Right ventricle myocardium inferior (tissue), 1 donor: ENCODE measurements at regions of chr2 and their contacts with region 1.

Region 1: DNA sequence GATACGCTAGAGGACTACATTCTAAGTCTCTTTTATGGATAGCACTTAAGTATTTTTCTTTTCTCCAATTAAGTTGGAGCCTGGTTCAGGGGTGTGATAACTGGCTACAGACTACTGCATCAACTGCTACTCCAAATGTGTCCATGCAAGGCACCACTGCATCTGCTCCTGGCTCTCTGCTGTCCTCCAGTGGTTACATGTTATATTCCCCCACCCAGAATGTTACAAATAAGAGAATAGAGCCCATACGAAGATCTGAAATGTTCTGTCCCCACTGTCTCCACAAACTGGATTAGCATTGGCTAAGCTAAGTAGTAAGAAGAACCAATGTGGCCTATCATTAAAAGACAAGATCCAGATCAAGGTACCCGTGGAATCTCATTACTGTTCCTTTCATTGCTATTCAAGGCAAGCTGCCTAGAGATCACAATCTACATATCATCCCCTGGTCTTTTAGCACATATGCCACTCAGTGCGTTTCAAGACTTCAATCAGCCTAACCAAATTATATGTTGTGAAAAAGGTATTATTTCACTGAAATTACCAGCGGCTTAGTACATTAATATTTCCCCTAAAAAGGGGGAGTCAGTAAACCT is 308.3 kb upstream of the SLC8A1 start:
- DNase-seq: peak; percentile 65
- ATAC-seq: peak; percentile 73

Region 2: DNA sequence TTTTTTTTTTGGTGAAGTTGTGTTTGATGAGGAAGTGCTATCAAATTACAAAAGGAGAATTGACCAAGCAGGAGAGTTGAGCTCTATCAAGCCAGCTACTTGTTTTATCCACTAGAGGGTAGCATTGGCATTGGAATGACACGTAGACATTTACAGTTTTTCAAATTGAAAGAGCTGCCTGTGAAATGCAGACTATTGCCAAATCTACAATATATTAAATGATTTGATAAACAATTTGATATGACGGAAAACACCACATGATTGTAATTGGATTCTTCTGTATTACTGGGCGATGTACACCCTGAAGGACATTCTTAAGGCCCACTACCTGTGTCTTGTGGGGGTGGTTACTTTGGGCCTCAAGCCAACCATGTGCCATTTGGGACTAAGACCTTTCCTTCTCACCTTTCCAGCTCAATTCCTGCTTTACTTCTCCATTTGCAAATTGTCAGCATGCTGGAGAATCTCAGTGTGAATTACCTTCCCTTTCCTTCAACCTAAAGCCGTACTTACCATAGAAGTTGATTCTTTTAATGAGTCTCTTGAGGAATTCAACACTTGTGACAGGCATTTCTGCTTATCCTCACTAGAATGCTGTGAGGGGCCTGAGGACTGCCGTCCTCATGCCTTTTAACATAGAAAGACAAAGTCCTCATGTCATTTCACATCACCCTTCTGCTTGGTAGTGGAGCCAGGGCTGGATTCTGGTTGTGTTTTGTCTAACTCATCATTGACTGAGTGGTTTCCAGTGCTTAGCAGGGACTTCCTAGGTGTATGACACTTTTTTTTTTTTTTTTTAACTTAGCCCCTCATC is 846.3 kb before region 1 on chr2:
- intact Hi-C with region 1: loop called (anchors 2 kb)
- DNase-seq: no peak
- ATAC-seq: peak; percentile 70

Region 3: DNA sequence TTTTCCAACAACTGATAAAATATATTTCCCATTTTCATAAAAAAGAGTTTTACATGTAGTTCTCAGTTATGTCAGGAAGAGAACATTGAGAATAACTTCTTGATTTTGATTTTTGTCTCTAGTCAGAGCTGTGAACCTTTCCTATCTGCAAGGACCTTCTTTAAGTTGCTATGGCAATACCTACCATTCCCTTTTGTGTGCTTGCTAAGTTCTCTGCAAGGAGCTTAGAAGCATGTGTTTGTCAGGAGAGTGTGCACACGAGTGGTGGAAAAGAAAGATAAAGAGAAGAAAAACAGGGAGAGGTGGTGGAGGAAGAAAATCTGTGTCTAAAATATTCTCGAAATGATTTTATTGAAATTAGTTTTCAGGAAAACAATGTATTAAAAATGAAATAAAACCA is 168.0 kb before region 1 on chr2:
- intact Hi-C with region 1: loop called (anchors 10 kb)
- DNase-seq: no peak
- ATAC-seq: no peak

Region 4: GRCh38 chr2:41879235-41879916 is 1119.2 kb after region 1 on chr2:
- intact Hi-C with region 1: no loop called
- DNase-seq: no peak
- ATAC-seq: peak; percentile 35